ENCODE measurements at regions of chr11 and their contacts with region 1.

Region 1: DNA sequence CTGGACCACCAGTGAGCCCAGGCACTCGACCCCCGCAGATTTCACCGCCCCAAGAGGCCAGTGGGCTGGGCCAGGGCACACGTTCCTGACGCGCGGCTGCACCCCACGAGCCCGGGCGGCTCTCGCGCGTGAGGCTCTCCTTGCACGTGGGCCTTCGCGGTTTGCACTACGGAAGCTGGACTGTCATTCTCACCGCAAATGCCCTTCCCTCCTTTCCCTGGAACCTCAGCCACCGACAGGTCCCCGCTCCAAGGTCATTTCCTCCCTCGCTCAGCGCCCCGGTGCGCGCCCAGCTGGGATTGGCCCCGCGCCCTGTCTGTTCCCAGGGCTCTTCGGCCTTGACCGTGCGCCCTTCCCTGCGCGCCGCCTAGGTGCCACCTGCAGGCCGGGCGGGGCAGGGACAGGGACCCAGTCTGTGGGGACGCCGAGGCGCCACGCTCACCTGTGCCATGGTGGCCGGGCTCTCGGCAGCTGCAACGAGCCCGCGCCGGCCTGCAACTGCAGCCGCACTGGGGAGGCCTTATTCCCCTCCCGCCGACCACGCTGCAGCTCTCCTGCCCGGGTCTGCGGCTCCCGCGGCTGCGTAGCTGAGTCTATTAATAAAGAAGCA is 2.1 kb upstream of the CPT1A start:
- DNase-seq: peak; percentile 34 to 86 (median 72)
- ATAC-seq: peak; percentile 33
- H3K4me3 ChIP-seq: peak overlapping the region; percentile 61
- H3K4me3 Mint-ChIP-seq: peak overlapping the region; percentile 91
- H3K27ac ChIP-seq: peak overlapping the region in 1 of 2 donors; percentile 2
- H3K27ac Mint-ChIP-seq: peak overlapping the region; percentile 70
- H3K4me1 ChIP-seq: peaks cover 52% of the 10 kb centered on the region
- H3K4me1 Mint-ChIP-seq: peaks cover 43% of the 10 kb centered on the region
- H3K27me3 ChIP-seq: no peaks in the 10 kb centered on the region
- H3K27me3 Mint-ChIP-seq: no peaks in the 10 kb centered on the region
- CTCF ChIP-seq: peak; percentile 78

Region 2: DNA sequence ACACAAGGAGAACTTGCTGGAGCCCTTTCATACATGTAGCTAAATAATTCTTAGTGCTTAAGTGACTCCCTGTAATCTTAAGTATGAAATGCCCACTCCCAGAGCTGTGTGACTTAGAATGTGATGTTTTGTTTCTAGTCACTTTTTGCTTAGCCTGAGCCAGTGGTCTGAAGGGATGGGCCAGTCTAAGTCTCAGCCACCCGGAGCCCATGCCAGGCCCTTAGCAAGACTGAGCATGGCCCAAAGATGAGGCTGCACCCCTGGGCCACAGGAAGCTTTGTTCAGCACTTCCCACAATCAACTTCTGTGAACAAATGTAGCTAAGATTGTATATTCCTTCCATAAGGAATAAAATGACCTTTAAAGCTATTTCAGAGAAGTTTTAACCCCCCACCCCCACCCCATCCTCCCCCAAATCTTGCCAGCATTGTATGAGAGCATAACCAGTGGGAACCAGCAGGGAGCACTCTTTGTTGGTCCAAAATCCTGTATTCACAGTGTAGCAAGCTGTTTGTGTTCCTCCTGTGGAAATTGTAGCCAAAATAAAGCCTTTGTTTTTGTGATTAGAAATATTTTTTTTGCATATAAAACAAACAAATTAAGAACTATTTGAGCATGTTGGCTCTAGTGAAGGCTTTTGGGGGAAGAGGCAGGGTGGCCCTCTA is 233.2 kb before region 1 on chr11:
- CTCF ChIA-PET with region 1: no interaction called
- POLR2A ChIA-PET with region 1: no interaction called
- intact Hi-C with region 1: loop called in 1 of 2 experiments (anchors 10 kb)
- DNase-seq: no peak
- ATAC-seq: no peak
- H3K4me3 ChIP-seq: no peak overlapping the region
- H3K4me3 Mint-ChIP-seq: no peak overlapping the region
- H3K27ac ChIP-seq: no peak overlapping the region
- H3K27ac Mint-ChIP-seq: no peak overlapping the region
- H3K4me1 ChIP-seq: no peaks in the 10 kb centered on the region
- H3K4me1 Mint-ChIP-seq: no peaks in the 10 kb centered on the region
- H3K27me3 ChIP-seq: no peaks in the 10 kb centered on the region
- H3K27me3 Mint-ChIP-seq: no peaks in the 10 kb centered on the region
- CTCF ChIP-seq: no peak

Region 3: DNA sequence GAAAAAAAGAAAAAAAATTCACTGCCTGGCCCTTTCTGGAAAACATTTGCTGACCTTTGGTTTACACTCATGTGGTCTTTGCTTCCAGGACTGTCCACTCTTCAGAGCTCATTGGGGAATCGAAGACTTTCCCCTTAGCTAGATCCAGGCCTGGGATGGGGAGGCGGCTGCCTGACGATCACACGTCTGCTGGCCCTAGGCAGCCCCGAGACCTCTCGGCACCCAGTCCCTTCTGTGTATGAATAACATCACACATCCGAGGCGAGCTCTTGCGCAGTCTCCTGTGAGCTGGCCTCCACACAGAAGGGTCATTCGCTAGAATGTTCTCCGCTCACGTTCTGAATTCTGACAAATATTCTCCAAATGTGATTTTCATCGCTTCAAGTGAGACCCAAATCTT is 185.1 kb before region 1 on chr11:
- CTCF ChIA-PET with region 1: no interaction called
- POLR2A ChIA-PET with region 1: no interaction called
- intact Hi-C with region 1: no loop called
- DNase-seq: no peak
- ATAC-seq: no peak
- H3K4me3 ChIP-seq: no peak overlapping the region
- H3K4me3 Mint-ChIP-seq: no peak overlapping the region
- H3K27ac ChIP-seq: no peak overlapping the region
- H3K27ac Mint-ChIP-seq: no peak overlapping the region
- H3K4me1 ChIP-seq: no peaks in the 10 kb centered on the region
- H3K4me1 Mint-ChIP-seq: no peaks in the 10 kb centered on the region
- H3K27me3 ChIP-seq: peaks cover 0 to 2% of the 10 kb centered on the region in 2 experiments
- H3K27me3 Mint-ChIP-seq: peaks cover 8% of the 10 kb centered on the region
- CTCF ChIP-seq: no peak

Region 4: GRCh38 chr11:68798221-68798813 is 45.5 kb before region 1 on chr11:
- CTCF ChIA-PET with region 1: interaction called, 15 read pairs
- POLR2A ChIA-PET with region 1: interaction called, 3 read pairs
- intact Hi-C with region 1: loop called in 1 of 2 experiments (anchors 10 kb)
- DNase-seq: peak; percentile 14 to 66 (median 33)
- ATAC-seq: no peak
- H3K4me3 ChIP-seq: no peak overlapping the region
- H3K4me3 Mint-ChIP-seq: no peak overlapping the region
- H3K27ac ChIP-seq: no peak overlapping the region
- H3K27ac Mint-ChIP-seq: no peak overlapping the region
- H3K4me1 ChIP-seq: no peaks in the 10 kb centered on the region
- H3K4me1 Mint-ChIP-seq: no peaks in the 10 kb centered on the region
- H3K27me3 ChIP-seq: no peaks in the 10 kb centered on the region
- H3K27me3 Mint-ChIP-seq: no peaks in the 10 kb centered on the region
- CTCF ChIP-seq: peak; percentile 71

Region 5: GRCh38 chr11:68825571-68825970 is 18.2 kb before region 1 on chr11:
- CTCF ChIA-PET with region 1: interaction called, 42 read pairs
- POLR2A ChIA-PET with region 1: interaction called, 4 read pairs
- intact Hi-C with region 1: loop called (anchors 1 kb)
- DNase-seq: peak in 13 of 14 experiments; percentile 24 to 77 (median 48)
- ATAC-seq: peak; percentile 74
- H3K4me3 ChIP-seq: no peak overlapping the region
- H3K4me3 Mint-ChIP-seq: no peak overlapping the region
- H3K27ac ChIP-seq: no peak overlapping the region
- H3K27ac Mint-ChIP-seq: no peak overlapping the region
- H3K4me1 ChIP-seq: peaks cover 35% of the 10 kb centered on the region
- H3K4me1 Mint-ChIP-seq: peaks cover 31% of the 10 kb centered on the region
- H3K27me3 ChIP-seq: no peaks in the 10 kb centered on the region
- H3K27me3 Mint-ChIP-seq: no peaks in the 10 kb centered on the region
- CTCF ChIP-seq: peak; percentile 20

Region 6: DNA sequence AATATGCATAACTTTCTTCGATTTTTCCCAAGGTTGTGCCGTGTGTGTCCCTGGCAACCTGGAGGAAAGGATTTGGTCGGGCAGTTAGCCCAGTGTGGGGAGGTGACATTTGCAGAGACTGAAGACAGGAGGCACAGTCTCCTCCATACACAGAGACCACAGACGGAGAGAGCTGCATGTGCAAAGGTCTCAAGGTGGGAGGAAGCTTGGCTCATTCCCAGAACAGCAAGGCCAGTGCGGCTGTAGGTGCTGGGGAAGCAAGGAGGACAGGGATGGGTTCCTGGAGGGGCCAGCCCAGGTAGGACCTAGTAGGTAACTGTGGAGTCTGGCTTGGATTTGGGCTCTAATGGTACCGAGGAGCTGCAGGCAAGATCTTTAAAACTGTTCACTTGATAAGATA is 18.6 kb after region 1 on chr11:
- CTCF ChIA-PET with region 1: no interaction called
- POLR2A ChIA-PET with region 1: no interaction called
- intact Hi-C with region 1: no loop called
- DNase-seq: no peak
- ATAC-seq: no peak
- H3K4me3 ChIP-seq: no peak overlapping the region
- H3K4me3 Mint-ChIP-seq: no peak overlapping the region
- H3K27ac ChIP-seq: no peak overlapping the region
- H3K27ac Mint-ChIP-seq: no peak overlapping the region
- H3K4me1 ChIP-seq: no peaks in the 10 kb centered on the region
- H3K4me1 Mint-ChIP-seq: no peaks in the 10 kb centered on the region
- H3K27me3 ChIP-seq: peaks cover 0 to 3% of the 10 kb centered on the region in 2 experiments
- H3K27me3 Mint-ChIP-seq: no peaks in the 10 kb centered on the region
- CTCF ChIP-seq: no peak

Region 7: GRCh38 chr11:69048718-69049489 is 205.1 kb after region 1 on chr11 and contains the start of gene TPCN2:
- CTCF ChIA-PET with region 1: no interaction called
- POLR2A ChIA-PET with region 1: interaction called, 7 read pairs
- intact Hi-C with region 1: loop called in 1 of 2 experiments (anchors 5 kb)
- DNase-seq: peak; percentile 82 to 98 (median 89)
- ATAC-seq: peak; percentile 99
- H3K4me3 ChIP-seq: peak within 1 kb of the TSS; percentile 66
- H3K4me3 Mint-ChIP-seq: peak within 1 kb of the TSS; percentile 87
- H3K27ac ChIP-seq: peak within 1 kb of the TSS; percentile 45 to 80
- H3K27ac Mint-ChIP-seq: peak within 1 kb of the TSS; percentile 90
- H3K4me1 ChIP-seq: peaks cover 39% of the 10 kb centered on the region
- H3K4me1 Mint-ChIP-seq: peaks cover 30% of the 10 kb centered on the region
- H3K27me3 ChIP-seq: no peaks in the 10 kb centered on the region
- H3K27me3 Mint-ChIP-seq: peaks cover 5% of the 10 kb centered on the region
- CTCF ChIP-seq: no peak
- total RNA-seq, gene TPCN2: 10.2 to 11.5 TPM

Region 8: GRCh38 chr11:69775163-69775755 is 931.5 kb after region 1 on chr11 and contains the start of gene FGF4:
- CTCF ChIA-PET with region 1: no interaction called
- POLR2A ChIA-PET with region 1: no interaction called
- intact Hi-C with region 1: no loop called
- DNase-seq: no peak
- ATAC-seq: no peak
- H3K4me3 ChIP-seq: no peak within 1 kb of the TSS
- H3K4me3 Mint-ChIP-seq: no peak within 1 kb of the TSS
- H3K27ac ChIP-seq: no peak within 1 kb of the TSS
- H3K27ac Mint-ChIP-seq: no peak within 1 kb of the TSS
- H3K4me1 ChIP-seq: no peaks in the 10 kb centered on the region
- H3K4me1 Mint-ChIP-seq: no peaks in the 10 kb centered on the region
- H3K27me3 ChIP-seq: peaks cover 14 to 49% of the 10 kb centered on the region in 2 experiments
- H3K27me3 Mint-ChIP-seq: peaks cover 57% of the 10 kb centered on the region
- CTCF ChIP-seq: no peak
- total RNA-seq, gene FGF4: not detected

Measured in CD4-positive, alpha-beta T cell (primary cell).